ENCODE measurements at regions of chr11 and their contacts with region 1.

Region 1: DNA sequence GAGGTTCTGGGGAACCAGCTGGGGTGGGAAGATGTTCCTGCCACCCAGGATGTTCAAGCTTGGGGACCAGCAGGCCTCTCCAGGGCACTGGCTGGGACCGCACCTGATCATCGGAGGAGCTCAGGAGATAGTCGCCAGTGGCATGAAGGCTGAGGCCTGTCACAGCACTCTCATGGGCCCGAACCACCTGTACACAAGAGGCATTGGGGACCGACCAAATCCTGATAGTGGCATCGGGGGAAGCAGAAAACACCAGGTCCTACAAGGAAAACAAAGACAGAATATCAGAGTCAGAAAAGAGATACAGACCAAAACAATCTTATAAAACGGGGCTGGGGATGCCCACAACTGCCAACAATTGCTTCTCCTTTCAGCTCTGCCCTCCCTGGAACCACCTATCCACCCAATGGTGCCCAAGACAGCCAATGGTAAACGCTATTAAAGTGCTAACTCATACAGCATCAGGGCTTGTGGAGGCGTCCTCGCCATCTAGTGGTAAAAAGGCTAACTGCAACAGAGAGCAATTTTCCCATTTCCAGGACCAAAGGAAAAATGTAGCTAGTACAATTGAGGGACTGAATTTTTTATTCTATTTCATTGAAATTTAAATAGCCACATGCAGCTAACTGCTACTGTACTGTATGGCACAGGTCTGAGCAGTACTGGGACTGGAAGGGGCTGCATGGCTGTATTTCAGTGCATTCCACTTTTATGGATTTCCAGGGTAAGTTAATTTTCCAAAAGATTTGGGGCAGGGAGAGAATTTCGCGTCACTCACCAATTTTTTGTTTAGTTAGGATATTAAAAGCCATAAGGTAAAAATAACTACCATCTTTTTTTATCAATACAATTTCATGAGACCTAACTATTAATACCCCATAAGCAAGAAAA is 7.1 kb downstream of the PRPF19 start:
- DNase-seq: no peak
- ATAC-seq: peak; percentile 72

Region 2: DNA sequence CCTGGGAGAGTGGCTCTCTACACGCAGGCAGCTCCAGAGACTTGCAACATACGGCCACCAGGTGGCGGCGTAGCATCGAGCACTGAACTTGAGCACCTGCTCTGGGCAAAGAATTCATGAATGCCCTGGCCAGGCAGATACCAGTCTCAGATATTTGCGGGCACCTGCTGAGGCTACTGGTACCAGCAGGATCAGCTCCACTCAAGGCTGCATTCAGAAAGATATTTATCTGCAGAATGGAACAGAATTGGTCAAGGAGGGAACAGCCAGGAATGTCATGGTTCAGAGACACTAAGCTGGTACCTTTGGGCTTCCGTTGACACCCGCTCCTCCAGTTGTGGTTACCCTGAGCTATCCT is 68.2 kb before region 1 on chr11:
- intact Hi-C with region 1: loop called (anchors 5 kb)
- DNase-seq: peak; percentile 91
- ATAC-seq: peak; percentile 93